GM18951 (cell line): ENCODE measurements at regions of chr18 and their contacts with region 1.

Region 1: DNA sequence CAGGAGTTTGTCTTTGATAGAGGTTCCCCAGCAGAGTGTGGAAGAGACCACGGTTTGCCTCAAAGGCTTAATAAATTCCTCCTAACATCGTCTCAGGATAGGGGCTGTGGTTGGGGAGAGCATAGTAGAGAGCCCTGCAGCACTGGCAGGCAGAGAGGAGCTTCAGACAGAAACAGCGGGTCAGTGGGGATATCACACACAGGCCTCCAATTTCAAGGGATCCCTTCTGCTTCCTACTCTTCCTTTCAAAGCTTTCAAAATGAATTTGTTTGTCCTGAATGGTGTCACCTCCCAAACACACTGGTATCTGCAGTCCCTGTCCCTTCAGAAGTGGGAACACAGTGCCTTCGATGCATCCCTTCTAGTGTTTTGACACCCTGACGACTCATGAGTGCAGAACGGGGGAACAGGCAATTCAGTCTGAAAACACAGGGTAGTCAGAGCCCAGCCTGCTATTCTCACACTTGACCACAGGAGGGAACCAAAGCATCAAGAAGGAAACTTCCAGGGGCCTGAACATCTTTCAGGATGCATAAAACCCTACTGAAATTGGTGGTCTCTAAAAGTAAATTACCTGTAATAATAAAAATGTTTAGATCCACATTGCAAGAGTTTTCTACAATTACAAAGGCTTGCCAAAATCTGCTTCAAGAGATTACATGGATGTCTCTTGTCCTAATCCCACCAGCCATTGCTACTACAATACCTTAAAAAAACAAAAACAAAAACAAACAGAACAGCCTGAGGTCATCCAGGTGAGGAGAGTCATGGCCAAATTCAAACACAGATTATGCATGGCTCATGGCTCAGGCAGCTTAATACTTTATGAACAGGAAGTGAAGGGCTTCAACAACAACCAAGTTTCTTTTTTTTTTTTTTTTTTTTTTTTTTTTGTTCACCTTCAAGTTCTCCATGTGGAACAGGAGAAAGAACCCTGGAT is 49.8 kb downstream of the SLC14A2 start:
- POLR2A ChIP-seq: no peak

Region 2: DNA sequence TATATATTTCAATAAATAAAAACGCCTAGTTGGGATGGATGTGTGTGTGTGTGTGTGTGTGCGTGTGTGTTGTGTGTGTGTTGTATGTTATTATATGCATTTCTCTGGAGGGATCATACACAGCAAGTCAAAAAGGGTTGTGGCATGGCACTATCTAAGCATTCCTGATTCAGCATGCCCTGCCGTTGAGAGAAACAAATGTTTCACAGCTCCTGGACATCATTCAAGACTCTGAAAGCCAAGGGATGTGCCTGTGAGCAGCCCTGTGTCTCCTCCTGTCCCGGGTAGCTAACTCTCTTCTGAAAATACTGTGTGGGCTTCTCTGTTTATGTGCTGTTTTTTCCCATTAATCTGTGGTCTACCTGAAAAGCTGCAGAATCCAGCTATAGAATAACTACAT is 1182.3 kb before region 1 on chr18:
- in situ Hi-C with region 1: no loop called
- POLR2A ChIP-seq: no peak

Region 3: DNA sequence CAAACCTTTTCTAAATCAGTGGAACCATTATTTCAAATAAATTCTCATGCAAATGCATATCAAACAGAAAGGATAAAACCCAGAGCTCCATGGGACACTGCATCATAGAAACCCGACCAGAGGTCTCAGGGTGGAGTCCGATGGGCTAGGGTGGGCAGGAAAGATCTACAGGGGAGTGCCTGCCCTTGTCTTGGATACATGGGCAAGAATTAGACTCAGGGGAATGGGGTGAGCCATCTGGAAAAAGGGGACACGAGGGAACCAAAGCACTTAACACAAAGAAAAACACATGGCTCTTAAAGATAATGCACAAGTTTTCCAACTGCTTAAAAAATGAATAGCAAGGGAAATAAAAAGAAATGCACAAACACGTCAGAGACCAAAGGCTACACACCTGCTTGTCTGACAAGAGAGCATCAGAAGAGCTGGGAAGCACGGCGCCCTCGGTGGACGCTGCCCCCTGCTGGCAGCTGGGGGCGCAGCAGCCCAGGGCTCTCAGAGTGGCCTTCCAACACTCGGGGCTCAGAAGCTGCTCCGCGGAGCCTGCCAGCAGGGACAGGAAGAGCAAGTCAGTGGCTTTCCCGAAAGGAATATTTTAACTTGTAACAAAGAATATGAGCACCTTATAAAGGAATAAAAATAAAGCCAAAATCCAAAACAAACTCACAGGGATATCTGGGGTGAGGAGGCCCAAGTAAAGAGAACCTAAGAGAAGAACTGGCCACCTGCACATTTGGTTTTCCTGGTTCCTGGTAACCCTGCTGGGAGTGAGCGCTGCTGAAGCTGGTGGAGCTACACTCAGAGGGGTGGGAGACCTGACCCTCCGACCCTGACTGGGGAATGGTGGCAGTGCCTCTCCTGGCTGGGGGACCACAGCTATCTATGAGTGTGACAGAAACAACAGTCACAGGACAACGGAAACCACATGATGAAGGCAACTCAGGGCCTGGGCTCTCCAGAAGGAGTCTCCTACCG is 214.9 kb after region 1 on chr18:
- in situ Hi-C with region 1: loop called (anchors 10 kb)
- POLR2A ChIP-seq: no peak

Region 4: GRCh38 chr18:46073474-46074331 is 408.6 kb after region 1 on chr18:
- in situ Hi-C with region 1: loop called (anchors 25 kb)
- POLR2A ChIP-seq: no peak

Region 5: GRCh38 chr18:47108998-47109405 is 1443.9 kb after region 1 on chr18:
- in situ Hi-C with region 1: no loop called
- POLR2A ChIP-seq: no peak